Uterus (tissue), 4 donors: ENCODE measurements at regions of chrX and their contacts with region 1.

Region 1: GRCh38 chrX:107716816-107717700 is 58.5 kb downstream of the TSC22D3 start:
- DNase-seq: peak; percentile 85 to 91
- H3K4me3 ChIP-seq: peak overlapping the region; percentile 66 to 70
- H3K27ac ChIP-seq: peak overlapping the region; percentile 95 to 96
- H3K4me1 ChIP-seq: no peaks in the 10 kb centered on the region
- H3K27me3 ChIP-seq: no peaks in the 10 kb centered on the region
- CTCF ChIP-seq: peak in 2 of 4 experiments; percentile 4 to 30
- POLR2A ChIP-seq: peak; percentile 93 to 97

Region 2: DNA sequence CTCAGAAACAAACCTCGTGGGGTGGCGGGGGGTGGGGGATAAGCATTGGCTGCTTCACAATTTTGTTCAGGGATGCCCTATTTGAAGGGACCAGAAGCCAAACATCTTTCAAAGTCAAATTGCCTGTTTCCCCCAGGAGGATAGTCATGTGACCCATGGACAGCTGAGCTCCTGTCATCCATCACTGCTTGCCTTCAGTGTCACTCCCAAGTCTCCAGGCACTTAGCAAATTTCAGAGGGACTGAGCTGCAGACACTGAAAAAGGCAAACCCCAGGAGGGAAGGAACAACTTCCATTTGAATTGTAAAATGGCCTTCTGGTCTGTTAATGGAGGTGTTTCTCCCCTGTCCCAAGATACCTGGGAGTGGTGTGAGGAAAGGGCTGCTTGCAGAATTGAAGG is 194.2 kb before region 1 on chrX:
- intact Hi-C with region 1: no loop called
- DNase-seq: no peak
- H3K4me3 ChIP-seq: no peak overlapping the region
- H3K27ac ChIP-seq: no peak overlapping the region
- H3K4me1 ChIP-seq: no peaks in the 10 kb centered on the region
- H3K27me3 ChIP-seq: no peaks in the 10 kb centered on the region
- CTCF ChIP-seq: no peak
- POLR2A ChIP-seq: no peak

Region 3: DNA sequence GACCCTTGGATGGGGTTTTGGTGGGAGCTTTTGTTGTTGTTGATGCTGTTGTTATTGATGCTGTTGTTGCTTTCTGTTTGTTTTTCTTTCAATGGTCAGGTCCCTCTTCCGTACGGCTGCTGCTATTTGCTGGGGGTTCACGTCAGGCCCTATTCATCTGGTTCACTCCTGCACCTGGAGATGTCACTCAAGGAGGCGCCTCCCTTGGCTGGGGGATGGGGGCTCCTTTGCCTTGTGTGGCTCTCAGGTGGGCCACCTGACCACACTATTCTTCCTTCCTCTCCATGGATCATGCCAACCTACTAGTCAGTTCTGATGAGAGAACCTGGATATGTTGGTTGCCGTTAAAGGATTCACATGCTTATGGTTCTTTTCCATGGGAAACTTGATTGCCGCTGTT is 127.8 kb before region 1 on chrX:
- intact Hi-C with region 1: no loop called
- DNase-seq: no peak
- H3K4me3 ChIP-seq: no peak overlapping the region
- H3K27ac ChIP-seq: no peak overlapping the region
- H3K4me1 ChIP-seq: no peaks in the 10 kb centered on the region
- H3K27me3 ChIP-seq: no peaks in the 10 kb centered on the region
- CTCF ChIP-seq: no peak
- POLR2A ChIP-seq: no peak

Region 4: GRCh38 chrX:107672955-107673378 is 44.1 kb before region 1 on chrX:
- intact Hi-C with region 1: loop called (anchors 2 kb)
- DNase-seq: peak; percentile 83 to 90
- H3K4me3 ChIP-seq: peak overlapping the region in 1 of 2 donors; percentile 1
- H3K27ac ChIP-seq: peak overlapping the region; percentile 94
- H3K4me1 ChIP-seq: peaks cover 0 to 6% of the 10 kb centered on the region in 2 donors
- H3K27me3 ChIP-seq: no peaks in the 10 kb centered on the region
- CTCF ChIP-seq: peak; percentile 64 to 83 (median 68)
- POLR2A ChIP-seq: peak in 1 of 2 donors; percentile 35